GM10248 (cell line): ENCODE measurements at regions of chr19 and their contacts with region 1.

Region 1: DNA sequence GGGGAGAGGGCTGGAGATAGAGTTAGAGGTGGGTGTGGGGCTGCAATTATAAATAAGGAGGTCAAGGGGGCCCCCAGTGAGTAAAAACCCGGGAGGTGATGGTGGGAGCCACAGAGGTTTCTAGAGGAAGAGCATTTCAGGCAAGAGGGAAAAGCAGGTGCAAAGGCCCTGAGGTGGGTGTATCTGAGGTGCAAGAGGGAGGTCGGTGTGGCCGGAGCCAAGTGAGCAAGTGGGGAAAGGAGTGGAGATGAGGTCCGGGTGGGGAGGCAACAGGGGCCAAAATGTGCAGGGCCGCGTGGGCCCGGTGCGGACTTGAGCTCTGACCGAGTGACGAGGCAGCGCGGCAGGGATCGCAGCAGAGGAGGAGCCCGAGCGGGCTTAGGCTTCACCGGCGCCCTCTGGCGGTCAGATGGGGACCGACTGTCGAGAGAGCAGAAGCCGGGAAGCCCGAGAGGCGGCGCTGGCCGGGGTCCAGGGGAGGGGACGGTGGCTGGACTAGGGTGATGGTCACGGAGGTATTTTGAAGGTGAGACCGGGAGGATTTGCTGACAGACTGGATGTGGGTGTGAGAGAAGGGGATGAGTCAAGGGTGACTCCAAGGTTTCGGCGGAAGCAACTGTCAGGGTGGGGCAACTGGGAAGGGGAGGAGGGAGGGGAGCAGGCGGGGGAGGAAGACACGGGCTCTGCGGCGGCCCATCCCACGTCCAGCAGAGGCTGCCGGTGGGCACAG is 17.7 kb upstream of the SPACA4 start:
- DNase-seq: peak; percentile 91
- CTCF ChIP-seq: peak; percentile 98

Region 2: GRCh38 chr19:48333467-48334384 is 255.1 kb before region 1 on chr19:
- CTCF ChIA-PET with region 1: interaction called, 14 read pairs
- POLR2A ChIA-PET with region 1: no interaction called
- DNase-seq: peak; percentile 94
- CTCF ChIP-seq: peak; percentile 96

Region 3: DNA sequence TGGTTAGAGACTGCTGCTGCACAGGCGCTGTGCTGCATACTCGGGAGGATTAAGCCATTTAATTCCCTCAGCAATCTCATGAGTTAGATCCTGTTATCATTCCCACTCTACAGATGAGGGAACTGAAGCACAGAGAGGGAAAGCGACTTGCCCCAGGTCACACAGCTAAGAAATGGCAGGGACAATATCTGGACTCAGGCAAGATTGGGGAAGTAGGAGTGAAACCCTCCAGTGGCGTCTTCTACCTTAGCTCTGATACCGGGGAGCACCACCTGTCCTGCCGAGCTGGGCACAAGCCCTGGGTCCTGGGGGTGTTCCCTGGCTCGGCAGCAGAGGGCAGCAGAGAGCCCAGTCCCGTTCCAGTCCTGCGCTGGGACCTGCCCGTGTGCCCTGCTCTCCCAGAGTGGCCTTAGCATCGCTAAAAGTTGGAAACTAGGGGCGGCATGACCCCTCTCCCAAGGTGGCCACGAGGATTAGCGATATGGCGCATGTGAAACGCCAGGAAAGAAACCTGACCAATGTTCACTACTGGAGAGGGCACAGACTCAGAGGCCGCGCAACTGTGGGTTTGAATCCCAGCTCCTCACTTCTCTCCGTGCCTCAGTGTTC is 99.1 kb before region 1 on chr19:
- CTCF ChIA-PET with region 1: interaction called, 68 read pairs
- POLR2A ChIA-PET with region 1: no interaction called
- DNase-seq: peak; percentile 85
- CTCF ChIP-seq: peak; percentile 96

Region 4: GRCh38 chr19:48524728-48525127 is 64.1 kb before region 1 on chr19:
- CTCF ChIA-PET with region 1: interaction called, 12 read pairs
- POLR2A ChIA-PET with region 1: no interaction called
- DNase-seq: no peak
- CTCF ChIP-seq: no peak

Region 5: DNA sequence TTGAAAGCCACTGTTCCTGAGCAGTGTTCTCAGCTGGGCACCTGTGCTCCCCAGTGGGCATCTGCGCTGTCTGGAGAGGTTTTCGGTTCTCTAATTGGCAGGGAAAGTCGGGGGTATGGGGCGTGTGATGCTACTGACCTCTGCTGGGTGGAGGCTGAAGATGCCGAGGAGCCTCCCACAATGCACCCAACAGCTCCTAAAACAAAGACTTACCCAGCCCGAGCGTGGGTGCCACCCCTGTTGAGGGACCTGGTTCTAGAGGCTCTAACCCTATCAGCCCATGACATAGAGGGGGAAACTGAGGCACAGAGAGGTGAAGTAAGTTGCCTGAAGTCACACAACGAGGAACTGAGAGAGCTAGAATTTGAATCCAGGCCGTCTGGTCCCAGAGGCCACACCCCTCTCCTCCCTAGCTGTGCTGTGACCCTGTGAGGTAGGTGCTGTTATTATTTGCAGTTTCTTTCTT is 20.0 kb after region 1 on chr19:
- CTCF ChIA-PET with region 1: interaction called, 43 read pairs
- POLR2A ChIA-PET with region 1: no interaction called
- DNase-seq: peak; percentile 80
- CTCF ChIP-seq: peak; percentile 65

Region 6: GRCh38 chr19:48674921-48675824 is 86.3 kb after region 1 on chr19:
- CTCF ChIA-PET with region 1: no interaction called
- POLR2A ChIA-PET with region 1: no interaction called
- DNase-seq: peak; percentile 92
- CTCF ChIP-seq: peak; percentile 87

Region 7: GRCh38 chr19:48798937-48799336 is 210.1 kb after region 1 on chr19:
- CTCF ChIA-PET with region 1: no interaction called
- POLR2A ChIA-PET with region 1: no interaction called
- DNase-seq: no peak
- CTCF ChIP-seq: no peak